ENCODE measurements at regions of chr21 and their contacts with region 1.

Region 1: GRCh38 chr21:22993822-22994574 is 1995.8 kb downstream of the NCAM2 start:
- DNase-seq: no peak
- ATAC-seq: no peak

Region 2: GRCh38 chr21:23045955-23046354 is 52.0 kb after region 1 on chr21:
- intact Hi-C with region 1: loop called (anchors 2 kb)
- DNase-seq: no peak
- ATAC-seq: no peak